ENCODE measurements at regions of chr6 and their contacts with region 1.

Region 1: GRCh38 chr6:129667621-129668020 is 42.4 kb downstream of the ARHGAP18 start:
- DNase-seq: no peak
- ATAC-seq: no peak

Region 2: DNA sequence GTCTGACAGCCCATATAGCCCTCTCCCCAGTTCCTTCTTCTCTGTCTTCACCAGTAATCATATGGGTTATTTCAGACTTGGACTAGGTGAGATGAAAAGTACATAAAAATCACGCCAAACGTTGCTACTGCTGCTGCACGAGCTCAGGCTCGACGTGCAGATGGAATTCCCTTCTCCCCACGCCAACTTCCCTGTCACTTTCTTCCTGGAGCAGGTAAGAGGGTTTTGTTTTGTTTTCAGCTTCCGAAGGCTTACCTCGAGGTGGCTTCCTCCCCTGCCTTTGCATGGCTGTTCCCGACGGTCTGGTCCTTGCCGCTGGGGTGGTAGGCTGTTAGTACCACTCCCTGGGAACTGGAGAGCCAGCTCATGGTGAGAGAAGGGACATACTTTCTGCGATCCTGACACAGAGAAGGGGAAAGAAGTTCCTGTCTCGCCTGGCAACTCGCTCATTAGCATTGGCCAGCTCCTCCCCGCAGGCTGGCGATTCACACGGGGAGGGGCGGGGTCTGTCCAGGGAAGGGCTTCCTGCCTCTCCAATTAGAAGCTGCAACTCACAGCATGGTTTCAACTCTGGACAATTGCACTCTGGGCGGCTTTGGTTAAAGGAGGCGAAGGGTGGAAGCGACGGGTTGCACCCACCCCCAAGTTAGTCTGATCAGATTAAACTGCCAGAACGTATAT is 42.3 kb after region 1 on chr6 and contains the start of gene ARHGAP18:
- intact Hi-C with region 1: loop called (anchors 5 kb)
- DNase-seq: peak; percentile 95
- ATAC-seq: peak; percentile 98
- total RNA-seq, gene ARHGAP18: 8.1 TPM

Region 3: DNA sequence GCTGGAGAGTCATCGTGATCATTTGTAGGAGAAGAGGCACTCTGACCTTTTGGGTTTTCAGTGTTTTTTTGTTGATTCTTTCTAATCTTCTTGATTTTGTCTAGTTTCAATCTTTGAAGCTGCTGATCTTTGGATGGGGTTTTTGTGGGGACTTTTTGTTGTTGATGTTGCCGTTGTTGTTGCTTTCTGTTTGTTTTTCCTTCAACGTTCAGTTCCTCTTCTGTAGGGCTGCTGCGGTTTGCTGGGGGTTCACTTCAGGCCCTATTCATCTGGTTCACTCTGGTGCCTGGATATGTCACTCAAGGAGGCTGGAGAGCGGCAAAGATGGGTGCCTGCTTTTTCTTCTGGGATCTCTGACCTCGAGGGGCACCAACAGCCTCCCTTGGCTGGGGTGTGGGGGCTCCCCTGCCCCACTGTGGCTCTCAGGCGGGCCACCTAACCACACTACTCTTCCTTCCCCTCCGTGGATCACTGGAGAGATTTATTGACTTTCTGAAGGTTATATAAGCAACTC is 214.9 kb after region 1 on chr6:
- intact Hi-C with region 1: no loop called
- DNase-seq: no peak
- ATAC-seq: no peak